ENCODE measurements at regions of chr1 and their contacts with region 1.

Region 1: DNA sequence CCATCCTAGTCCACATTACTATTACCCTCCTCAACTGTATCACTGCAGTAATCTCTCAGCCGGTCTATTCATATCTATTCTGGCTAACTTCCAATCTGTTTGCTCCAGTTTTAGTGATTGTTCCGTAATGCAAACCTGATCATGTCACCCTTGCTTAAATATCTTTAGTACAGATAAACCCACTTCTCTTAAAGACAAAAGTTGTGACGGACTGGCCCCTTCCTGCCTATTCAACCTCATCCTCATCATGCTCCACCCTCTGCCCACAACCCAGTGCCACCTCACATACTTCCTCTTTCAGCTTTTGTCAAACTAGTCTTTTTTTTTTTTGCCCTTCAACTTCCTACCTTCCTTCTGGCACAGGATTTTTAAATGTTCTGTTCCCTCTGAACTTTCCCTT is 2.8 kb upstream of the C1orf162 start:
- DNase-seq: peak; percentile 87
- ATAC-seq: peak; percentile 83
- H3K4me3 Mint-ChIP-seq: no peak overlapping the region
- H3K27ac Mint-ChIP-seq: no peak overlapping the region
- H3K4me1 Mint-ChIP-seq: peaks cover 26% of the 10 kb centered on the region
- H3K27me3 Mint-ChIP-seq: no peaks in the 10 kb centered on the region
- CTCF ChIP-seq: no peak

Region 2: DNA sequence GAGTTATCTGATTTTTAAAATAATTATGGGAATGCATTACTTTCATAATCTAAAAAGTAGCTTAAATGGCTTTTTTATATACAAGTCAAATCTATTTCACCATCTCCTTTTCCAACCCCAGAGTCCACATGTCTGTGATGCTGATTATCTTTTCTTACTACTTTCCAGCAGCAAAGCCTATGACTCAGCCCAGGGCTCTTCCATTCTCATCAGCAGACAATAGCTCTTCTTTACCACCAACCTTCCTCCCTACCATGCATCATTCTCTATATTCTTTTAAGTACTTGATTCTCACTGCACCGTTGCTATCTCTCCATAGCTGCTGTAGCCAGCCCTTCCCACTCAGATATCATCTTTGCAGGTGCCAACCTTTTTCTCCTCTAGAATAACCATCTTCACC is 104.8 kb before region 1 on chr1:
- CTCF ChIA-PET with region 1: no interaction called
- POLR2A ChIA-PET with region 1: no interaction called
- intact Hi-C with region 1: no loop called
- DNase-seq: no peak
- ATAC-seq: no peak
- H3K4me3 Mint-ChIP-seq: no peak overlapping the region
- H3K27ac Mint-ChIP-seq: no peak overlapping the region
- H3K4me1 Mint-ChIP-seq: no peaks in the 10 kb centered on the region
- H3K27me3 Mint-ChIP-seq: peaks cover 17% of the 10 kb centered on the region
- CTCF ChIP-seq: no peak

Region 3: GRCh38 chr1:111454859-111455641 is 16.0 kb before region 1 on chr1:
- CTCF ChIA-PET with region 1: interaction called, 10 read pairs
- POLR2A ChIA-PET with region 1: interaction called, 4 read pairs
- intact Hi-C with region 1: no loop called
- DNase-seq: peak; percentile 27
- ATAC-seq: peak; percentile 74
- H3K4me3 Mint-ChIP-seq: peak overlapping the region; percentile 42
- H3K27ac Mint-ChIP-seq: peak overlapping the region; percentile 81
- H3K4me1 Mint-ChIP-seq: peaks cover 65% of the 10 kb centered on the region
- H3K27me3 Mint-ChIP-seq: no peaks in the 10 kb centered on the region
- CTCF ChIP-seq: no peak

Measured in activated CD8-positive, alpha-beta T cell treated with anti-CD3 and anti-CD28 coated beads for 36 hours (primary cell).